GM12878 (cell line): ENCODE measurements at regions of chr14 and their contacts with region 1.

Region 1: DNA sequence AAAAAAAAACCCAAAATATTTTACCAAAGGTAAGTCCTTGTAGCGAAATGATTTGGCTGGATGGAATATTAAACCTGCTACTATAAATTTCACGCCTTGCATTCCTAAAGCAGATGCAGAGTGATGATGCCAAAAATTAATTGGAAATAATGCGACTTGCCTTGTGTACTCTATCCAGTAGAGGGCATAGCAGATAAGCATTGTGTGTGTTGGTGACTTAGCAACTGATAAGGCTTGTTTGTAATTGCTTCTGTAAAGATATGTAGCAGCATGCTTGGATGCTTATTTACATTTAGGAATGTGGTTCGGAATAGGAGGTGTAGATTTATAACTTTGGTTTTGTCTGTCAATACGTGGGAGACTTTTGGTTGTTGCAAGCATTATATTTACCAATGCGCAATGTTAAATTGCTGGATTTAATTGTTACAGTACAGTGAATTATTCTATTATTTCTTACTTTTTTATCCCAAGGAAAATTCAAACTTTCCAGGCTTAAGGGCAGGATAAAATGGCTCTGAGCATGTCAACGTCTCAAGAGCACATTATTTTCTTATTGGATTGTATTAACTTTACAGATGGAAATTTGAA is 80.5 kb downstream of the TMEM260 start:
- DNase-seq: no peak
- ATAC-seq: peak; percentile 79
- H3K4me3 ChIP-seq: no peak overlapping the region
- H3K27ac ChIP-seq: no peak overlapping the region
- H3K4me1 ChIP-seq: no peaks in the 10 kb centered on the region
- H3K27me3 ChIP-seq: no peaks in the 10 kb centered on the region
- CTCF ChIP-seq: peak; percentile 53 to 69 (median 61)
- EP300 ChIP-seq: no peak
- POLR2A ChIP-seq: no peak
- RAD21 ChIP-seq: peak; percentile 57

Region 2: DNA sequence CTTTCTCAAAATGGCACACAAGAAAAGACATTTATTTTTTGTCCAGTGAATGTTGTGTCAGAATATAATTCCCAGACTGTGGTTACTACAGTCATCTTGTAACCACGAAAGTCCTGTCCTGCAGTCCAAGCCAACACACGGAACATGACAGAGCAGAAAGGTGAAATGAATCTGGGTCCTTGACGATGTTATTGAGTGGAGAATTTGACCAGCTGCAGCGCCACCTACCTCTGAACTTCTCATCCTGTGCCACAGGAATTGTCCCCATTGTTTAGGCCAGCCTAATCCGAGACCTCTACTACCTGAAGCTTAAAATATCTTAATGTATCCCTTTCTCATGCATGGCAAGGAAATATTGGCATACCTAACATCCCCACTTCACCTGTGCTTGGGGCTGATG is 214.3 kb after region 1 on chr14:
- CTCF ChIA-PET with region 1: no interaction called
- POLR2A ChIA-PET with region 1: no interaction called
- RAD21 ChIA-PET with region 1: no interaction called
- SMC1A ChIA-PET with region 1: no interaction called
- in situ Hi-C with region 1: no loop called
- intact Hi-C with region 1: loop called (anchors 10 kb)
- DNase-seq: no peak
- ATAC-seq: peak; percentile 76
- H3K4me3 ChIP-seq: no peak overlapping the region
- H3K27ac ChIP-seq: no peak overlapping the region
- H3K4me1 ChIP-seq: no peaks in the 10 kb centered on the region
- H3K27me3 ChIP-seq: no peaks in the 10 kb centered on the region
- CTCF ChIP-seq: peak; percentile 43 to 61 (median 45); a peak in 5 of 6 replicates
- EP300 ChIP-seq: no peak
- POLR2A ChIP-seq: no peak
- RAD21 ChIP-seq: peak; percentile 29; the same call in 1 of the 2 replicates

Region 3: DNA sequence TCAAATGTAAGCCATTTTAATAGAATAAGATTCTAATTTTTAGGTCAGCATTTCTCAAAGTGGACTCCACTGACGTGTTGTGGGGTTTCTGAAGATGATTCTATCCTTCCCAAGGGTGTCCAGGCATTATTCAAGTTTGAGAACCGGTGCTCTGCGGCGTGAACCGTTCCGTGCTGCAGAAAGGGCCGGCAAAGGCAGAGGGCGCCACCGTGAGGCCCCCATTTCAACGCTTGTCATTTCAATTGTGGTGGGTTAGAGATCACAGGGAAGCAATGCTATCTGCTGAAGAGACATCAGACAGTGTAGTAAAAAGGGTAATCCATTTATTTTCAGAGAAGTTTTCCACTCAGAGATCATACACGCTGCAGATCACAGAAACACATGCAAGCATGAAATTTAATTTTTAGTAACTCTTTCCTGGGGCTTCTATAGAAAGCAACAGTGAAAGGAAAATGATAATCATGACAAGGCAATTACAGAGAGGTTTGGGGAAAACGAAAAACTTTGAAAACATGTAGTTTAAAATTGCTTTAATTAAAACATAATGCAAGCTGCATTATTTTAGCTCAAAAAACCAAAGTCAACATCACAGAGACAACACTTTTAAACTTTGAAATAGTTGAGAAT is 406.9 kb after region 1 on chr14:
- CTCF ChIA-PET with region 1: no interaction called
- POLR2A ChIA-PET with region 1: no interaction called
- RAD21 ChIA-PET with region 1: no interaction called
- SMC1A ChIA-PET with region 1: no interaction called
- in situ Hi-C with region 1: no loop called
- intact Hi-C with region 1: loop called (anchors 5 kb)
- DNase-seq: no peak
- ATAC-seq: peak; percentile 89
- H3K4me3 ChIP-seq: no peak overlapping the region
- H3K27ac ChIP-seq: no peak overlapping the region
- H3K4me1 ChIP-seq: no peaks in the 10 kb centered on the region
- H3K27me3 ChIP-seq: peaks cover 0 to 7% of the 10 kb centered on the region in 2 experiments; a peak in 1 of 4 replicates
- CTCF ChIP-seq: peak; percentile 67 to 77 (median 69)
- EP300 ChIP-seq: no peak
- POLR2A ChIP-seq: no peak
- RAD21 ChIP-seq: peak; percentile 79

Region 4: GRCh38 chr14:57182760-57183503 is 522.9 kb after region 1 on chr14:
- CTCF ChIA-PET with region 1: interaction called, 3 read pairs
- POLR2A ChIA-PET with region 1: no interaction called
- RAD21 ChIA-PET with region 1: no interaction called
- SMC1A ChIA-PET with region 1: no interaction called
- in situ Hi-C with region 1: no loop called
- intact Hi-C with region 1: loop called (anchors 10 kb)
- DNase-seq: no peak
- ATAC-seq: peak; percentile 54; the same call in 2 of the 3 replicates
- H3K4me3 ChIP-seq: no peak overlapping the region
- H3K27ac ChIP-seq: no peak overlapping the region
- H3K4me1 ChIP-seq: no peaks in the 10 kb centered on the region
- H3K27me3 ChIP-seq: no peaks in the 10 kb centered on the region; a peak in 1 of 4 replicates
- CTCF ChIP-seq: peak; percentile 43 to 45 (median 44); a peak in 5 of 6 replicates
- EP300 ChIP-seq: no peak
- POLR2A ChIP-seq: no peak
- RAD21 ChIP-seq: peak; percentile 69

Region 5: DNA sequence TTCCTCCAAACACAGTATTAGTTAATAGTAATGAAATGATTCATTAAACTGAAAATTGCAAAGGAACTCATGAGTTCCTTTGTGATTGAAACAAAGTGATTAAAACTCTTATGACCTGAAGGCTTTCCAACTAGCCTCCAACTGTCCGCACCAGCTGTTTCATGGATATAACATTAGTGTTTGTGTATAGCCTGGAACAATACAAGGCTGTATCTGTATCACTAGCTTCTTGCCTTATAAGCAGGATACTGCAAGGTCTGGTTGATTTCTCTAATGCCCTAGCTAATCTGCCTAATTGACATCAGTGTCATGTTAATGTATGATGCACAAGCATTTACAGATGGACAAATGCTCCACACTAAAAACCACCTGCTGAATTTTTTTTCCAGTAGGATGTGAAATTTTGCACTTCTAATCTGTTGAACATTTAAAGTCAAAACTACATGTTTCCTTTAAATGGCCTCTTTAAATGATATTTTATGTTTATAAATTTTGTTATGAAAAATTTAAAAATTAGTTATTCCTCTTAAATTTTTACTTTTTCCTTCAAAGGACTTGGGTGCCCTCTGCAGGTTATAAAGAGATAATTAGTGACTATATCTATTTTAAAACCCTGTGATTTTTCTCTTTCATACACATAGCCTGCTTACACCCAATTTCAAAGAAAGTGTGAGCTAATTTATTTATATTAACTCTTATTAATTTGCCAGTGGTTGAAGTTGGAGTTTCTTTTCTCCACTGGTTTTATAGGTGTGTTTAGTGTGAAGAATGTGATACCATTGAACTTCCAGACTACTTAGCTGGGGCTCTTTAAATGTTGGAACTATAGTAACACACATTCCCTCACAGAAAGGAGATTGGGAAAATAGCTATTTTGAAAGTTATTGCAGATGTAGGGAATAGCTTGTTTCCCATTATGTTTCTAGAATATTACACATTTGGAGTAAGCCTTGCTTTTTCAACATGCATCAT is 634.1 kb after region 1 on chr14:
- CTCF ChIA-PET with region 1: interaction called, 11 read pairs
- POLR2A ChIA-PET with region 1: no interaction called
- RAD21 ChIA-PET with region 1: no interaction called
- SMC1A ChIA-PET with region 1: no interaction called
- in situ Hi-C with region 1: no loop called
- intact Hi-C with region 1: no loop called
- DNase-seq: no peak
- ATAC-seq: no peak
- H3K4me3 ChIP-seq: no peak overlapping the region
- H3K27ac ChIP-seq: no peak overlapping the region
- H3K4me1 ChIP-seq: no peaks in the 10 kb centered on the region
- H3K27me3 ChIP-seq: no peaks in the 10 kb centered on the region
- CTCF ChIP-seq: no peak; a peak in 2 of 6 replicates
- EP300 ChIP-seq: no peak
- POLR2A ChIP-seq: no peak
- RAD21 ChIP-seq: no peak

Region 6: GRCh38 chr14:57317316-57317715 is 657.3 kb after region 1 on chr14:
- CTCF ChIA-PET with region 1: interaction called, 4 read pairs
- POLR2A ChIA-PET with region 1: no interaction called
- RAD21 ChIA-PET with region 1: no interaction called
- SMC1A ChIA-PET with region 1: no interaction called
- in situ Hi-C with region 1: loop called (anchors 10 kb)
- intact Hi-C with region 1: loop called (anchors 10 kb)
- DNase-seq: peak; percentile 16
- ATAC-seq: peak; percentile 87
- H3K4me3 ChIP-seq: no peak overlapping the region
- H3K27ac ChIP-seq: no peak overlapping the region
- H3K4me1 ChIP-seq: no peaks in the 10 kb centered on the region
- H3K27me3 ChIP-seq: no peaks in the 10 kb centered on the region; a peak in 3 of 4 replicates
- CTCF ChIP-seq: peak; percentile 70 to 90 (median 86)
- EP300 ChIP-seq: no peak
- POLR2A ChIP-seq: no peak
- RAD21 ChIP-seq: peak; percentile 91